PC-9 (cell line): ENCODE measurements at regions of chr13 and their contacts with region 1.

Region 1: GRCh38 chr13:98142380-98143156 is at the start of gene FARP1:
- DNase-seq: peak; percentile 65 to 91
- H3K4me3 ChIP-seq: peak within 1 kb of the TSS; percentile 80
- H3K27ac ChIP-seq: no peak within 1 kb of the TSS
- H3K4me1 ChIP-seq: peaks cover 20% of the 10 kb centered on the region
- H3K27me3 ChIP-seq: no peaks in the 10 kb centered on the region
- CTCF ChIP-seq: no peak
- total RNA-seq, gene FARP1: 40.1 and 62.1 TPM in 2 replicates

Region 2: GRCh38 chr13:97849305-97849704 is 293.3 kb before region 1 on chr13:
- CTCF ChIA-PET with region 1: no interaction called
- POLR2A ChIA-PET with region 1: no interaction called
- intact Hi-C with region 1: loop called (anchors 2 kb)
- DNase-seq: peak; percentile 19 to 46
- H3K4me3 ChIP-seq: no peak overlapping the region
- H3K27ac ChIP-seq: no peak overlapping the region
- H3K4me1 ChIP-seq: peaks cover 9% of the 10 kb centered on the region; the same call in 1 of the 2 replicates
- H3K27me3 ChIP-seq: no peaks in the 10 kb centered on the region
- CTCF ChIP-seq: peak; percentile 71

Region 3: DNA sequence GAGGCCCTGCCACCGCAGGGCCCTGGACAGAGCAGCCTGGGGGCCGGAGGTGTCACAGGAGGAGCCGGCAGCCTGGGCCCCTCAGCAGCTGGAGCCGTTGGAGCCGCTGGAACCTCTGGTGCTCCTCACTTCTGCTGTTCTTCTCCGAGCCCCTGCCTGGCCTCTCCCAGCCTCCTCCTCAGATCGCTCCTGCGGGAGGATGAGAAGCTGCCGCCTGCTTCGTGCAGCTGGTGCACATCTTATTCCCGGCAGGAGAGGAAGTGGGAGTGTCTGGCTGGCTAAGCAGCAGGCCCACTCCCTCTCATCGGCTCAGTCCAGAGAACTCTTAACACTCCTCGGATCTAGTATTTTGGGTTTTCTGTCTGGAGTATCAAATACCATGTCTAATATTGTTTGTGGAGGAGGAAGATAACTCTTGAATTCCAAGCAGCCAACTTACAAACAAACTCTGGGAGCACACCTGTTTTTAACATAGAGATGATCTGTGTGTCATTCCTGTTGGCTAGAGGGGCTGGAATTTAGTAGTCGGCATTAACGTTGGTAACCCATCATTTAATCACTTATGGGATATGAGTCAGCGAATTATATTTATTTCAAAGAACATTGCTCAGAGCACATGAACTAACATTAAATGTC is 71.6 kb after region 1 on chr13:
- CTCF ChIA-PET with region 1: no interaction called
- POLR2A ChIA-PET with region 1: no interaction called
- intact Hi-C with region 1: loop called (anchors 1 kb)
- DNase-seq: peak in 1 of 2 experiments; percentile 73
- H3K4me3 ChIP-seq: peak overlapping the region; percentile 41; the same call in 1 of the 2 replicates
- H3K27ac ChIP-seq: peak overlapping the region; percentile 92
- H3K4me1 ChIP-seq: peaks cover 65% of the 10 kb centered on the region
- H3K27me3 ChIP-seq: no peaks in the 10 kb centered on the region
- CTCF ChIP-seq: no peak

Region 4: DNA sequence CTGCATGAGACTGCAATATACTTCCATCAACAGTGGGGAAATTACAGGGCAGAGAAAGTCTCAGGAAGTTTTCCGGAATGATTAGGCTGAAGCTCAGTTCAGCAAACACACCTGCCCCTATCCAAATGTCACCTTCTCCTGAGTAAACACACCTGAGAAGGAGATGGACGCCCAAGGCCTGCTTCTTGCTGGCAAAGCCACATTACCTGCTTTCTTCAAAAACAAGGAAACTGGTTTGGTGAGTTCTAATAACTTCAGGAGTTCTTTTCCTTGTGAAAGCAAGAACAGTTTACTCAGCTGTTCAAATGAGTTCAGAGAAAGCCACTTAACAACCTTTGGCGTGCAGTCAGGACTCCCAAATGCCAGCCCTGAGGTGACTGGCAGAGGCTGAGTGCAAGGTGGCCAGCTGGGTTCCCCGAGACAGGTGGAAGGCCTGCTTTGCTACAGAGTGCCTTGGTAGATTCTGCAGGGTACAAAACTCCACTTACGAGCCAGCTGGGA is 273.8 kb after region 1 on chr13:
- CTCF ChIA-PET with region 1: no interaction called
- POLR2A ChIA-PET with region 1: no interaction called
- intact Hi-C with region 1: loop called (anchors 5 kb)
- DNase-seq: peak; percentile 68 to 100
- H3K4me3 ChIP-seq: peak overlapping the region; percentile 22; the same call in 1 of the 2 replicates
- H3K27ac ChIP-seq: peak overlapping the region; percentile 65
- H3K4me1 ChIP-seq: peaks cover 33% of the 10 kb centered on the region
- H3K27me3 ChIP-seq: no peaks in the 10 kb centered on the region
- CTCF ChIP-seq: no peak

Region 5: GRCh38 chr13:98842864-98843481 is 700.4 kb after region 1 on chr13:
- CTCF ChIA-PET with region 1: no interaction called
- POLR2A ChIA-PET with region 1: no interaction called
- intact Hi-C with region 1: loop called (anchors 1 kb)
- DNase-seq: peak; percentile 59 to 62
- H3K4me3 ChIP-seq: no peak overlapping the region
- H3K27ac ChIP-seq: no peak overlapping the region
- H3K4me1 ChIP-seq: no peaks in the 10 kb centered on the region
- H3K27me3 ChIP-seq: no peaks in the 10 kb centered on the region
- CTCF ChIP-seq: peak; percentile 93